Dendritic cell treated with granulocyte-macrophage colony-stimulating factor and Interleukin-4, amounts not matched to agents 40 ng/mL and 50 ng/mL, for 4 days (primary cell): ENCODE measurements at regions of chr3 and their contacts with region 1.

Region 1: GRCh38 chr3:192917404-192918274 is at the start of gene MB21D2:
- H3K4me3 Mint-ChIP-seq: peak within 1 kb of the TSS; percentile 91
- H3K27ac Mint-ChIP-seq: peak within 1 kb of the TSS; percentile 92
- H3K4me1 Mint-ChIP-seq: peaks cover 44% of the 10 kb centered on the region
- H3K27me3 Mint-ChIP-seq: peaks cover 28% of the 10 kb centered on the region

Region 2: DNA sequence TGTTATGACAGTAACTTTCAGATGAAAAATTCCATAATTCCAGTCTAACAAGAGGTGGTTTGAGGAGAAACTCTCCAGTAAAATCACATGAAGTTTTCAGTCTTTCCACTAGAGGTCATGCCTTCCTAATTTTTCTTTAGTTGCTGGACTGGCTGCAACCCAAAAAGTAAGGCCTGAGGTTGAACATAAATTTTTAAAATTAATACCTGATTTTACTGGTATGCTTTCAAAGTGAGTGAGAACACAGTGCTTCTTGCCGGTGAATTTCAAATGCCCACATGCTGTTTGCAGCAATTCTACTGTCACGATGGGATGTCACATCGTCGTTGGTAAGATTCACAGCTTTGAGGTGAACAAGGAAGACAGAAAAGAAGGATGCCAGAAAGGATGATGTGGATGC is 101.3 kb before region 1 on chr3:
- intact Hi-C with region 1: loop called (anchors 2 kb)
- H3K4me3 Mint-ChIP-seq: no peak overlapping the region
- H3K27ac Mint-ChIP-seq: no peak overlapping the region
- H3K4me1 Mint-ChIP-seq: peaks cover 34% of the 10 kb centered on the region
- H3K27me3 Mint-ChIP-seq: peaks cover 6% of the 10 kb centered on the region

Region 3: GRCh38 chr3:192892981-192893700 is 24.5 kb before region 1 on chr3:
- intact Hi-C with region 1: loop called (anchors 1 kb)
- H3K4me3 Mint-ChIP-seq: peak overlapping the region; percentile 60
- H3K27ac Mint-ChIP-seq: peak overlapping the region; percentile 94
- H3K4me1 Mint-ChIP-seq: peaks cover 73% of the 10 kb centered on the region
- H3K27me3 Mint-ChIP-seq: no peaks in the 10 kb centered on the region

Region 4: DNA sequence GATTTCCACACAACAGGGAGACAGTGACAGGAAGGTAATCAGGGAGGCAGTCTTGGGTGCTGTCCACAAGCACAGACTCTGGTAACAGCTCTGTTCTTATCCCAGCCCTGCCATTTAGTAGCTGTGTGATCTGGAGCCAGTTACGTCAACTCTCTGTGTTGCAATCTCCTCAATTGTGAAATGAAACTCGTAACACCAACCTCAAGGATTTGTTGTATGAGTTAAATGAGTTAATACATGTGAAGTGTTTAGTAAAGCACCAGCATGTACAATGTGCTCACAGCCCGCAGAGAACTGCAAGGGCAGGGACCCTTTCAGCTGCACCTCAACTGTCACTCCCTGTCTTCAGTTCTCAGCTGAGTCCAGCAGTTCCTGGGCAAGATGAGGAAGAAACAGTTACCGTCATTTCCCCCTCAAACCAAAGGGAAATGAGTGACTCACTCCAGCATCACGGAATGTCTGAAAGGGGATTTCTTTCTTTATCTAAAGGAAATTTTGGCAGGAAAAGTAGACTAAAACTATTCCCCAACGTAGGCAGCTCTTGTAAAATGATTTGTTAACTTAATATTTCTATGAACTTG is 39.9 kb after region 1 on chr3:
- intact Hi-C with region 1: loop called (anchors 5 kb)
- H3K4me3 Mint-ChIP-seq: peak overlapping the region; percentile 55
- H3K27ac Mint-ChIP-seq: peak overlapping the region; percentile 89
- H3K4me1 Mint-ChIP-seq: peaks cover 25% of the 10 kb centered on the region
- H3K27me3 Mint-ChIP-seq: peaks cover 2% of the 10 kb centered on the region

Region 5: GRCh38 chr3:193592944-193593667 is 675.5 kb after region 1 on chr3 and contains the start of gene OPA1:
- intact Hi-C with region 1: loop called (anchors 10 kb)
- H3K4me3 Mint-ChIP-seq: peak within 1 kb of the TSS; percentile 89
- H3K27ac Mint-ChIP-seq: peak within 1 kb of the TSS; percentile 94
- H3K4me1 Mint-ChIP-seq: peaks cover 50% of the 10 kb centered on the region
- H3K27me3 Mint-ChIP-seq: no peaks in the 10 kb centered on the region